ENCODE measurements at regions of chr9 and their contacts with region 1.

Region 1: GRCh38 chr9:134983074-134983473 is 65.4 kb upstream of the FCN1 start:
- DNase-seq: peak; percentile 44
- ATAC-seq: peak in 1 of 2 donors; percentile 16

Region 2: GRCh38 chr9:134698587-134699342 is 284.3 kb before region 1 on chr9:
- intact Hi-C with region 1: loop called (anchors 5 kb)
- DNase-seq: peak; percentile 71
- ATAC-seq: peak; percentile 53 to 75

Region 3: DNA sequence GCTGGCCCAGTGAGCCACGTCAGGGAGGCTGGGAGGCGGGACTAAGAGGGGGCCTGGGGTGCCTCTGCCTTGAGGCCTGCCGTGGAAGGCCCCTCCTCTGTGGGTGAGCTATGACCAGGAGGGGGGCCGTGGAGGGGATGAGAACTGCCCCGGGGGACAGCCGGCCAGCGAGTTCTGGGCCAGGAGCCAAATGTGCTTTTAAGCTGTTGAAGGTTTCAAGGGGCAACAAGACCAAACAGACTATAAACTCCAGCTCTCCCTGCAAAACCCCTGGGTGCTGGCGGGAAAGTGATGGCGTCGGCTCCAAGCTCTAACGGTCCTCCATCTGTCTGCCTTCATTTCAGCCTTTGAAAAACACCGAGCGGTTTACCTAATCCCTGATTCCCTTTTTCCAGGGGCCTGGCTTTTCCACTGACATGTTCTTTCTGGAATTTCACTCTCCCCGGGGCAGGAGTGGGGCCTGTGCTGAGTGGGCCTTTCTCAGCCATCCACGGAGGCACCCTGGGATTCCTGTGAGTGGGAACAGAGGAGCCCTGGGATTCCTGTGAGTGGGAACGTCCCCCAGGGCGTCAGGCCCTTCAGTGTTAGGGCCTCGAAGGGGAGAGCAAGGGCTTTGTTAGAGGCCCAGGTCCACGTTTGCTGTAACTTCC is 275.9 kb before region 1 on chr9:
- intact Hi-C with region 1: loop called in 1 of 2 experiments (anchors 5 kb)
- DNase-seq: peak; percentile 81
- ATAC-seq: peak; percentile 70 to 84

Region 4: DNA sequence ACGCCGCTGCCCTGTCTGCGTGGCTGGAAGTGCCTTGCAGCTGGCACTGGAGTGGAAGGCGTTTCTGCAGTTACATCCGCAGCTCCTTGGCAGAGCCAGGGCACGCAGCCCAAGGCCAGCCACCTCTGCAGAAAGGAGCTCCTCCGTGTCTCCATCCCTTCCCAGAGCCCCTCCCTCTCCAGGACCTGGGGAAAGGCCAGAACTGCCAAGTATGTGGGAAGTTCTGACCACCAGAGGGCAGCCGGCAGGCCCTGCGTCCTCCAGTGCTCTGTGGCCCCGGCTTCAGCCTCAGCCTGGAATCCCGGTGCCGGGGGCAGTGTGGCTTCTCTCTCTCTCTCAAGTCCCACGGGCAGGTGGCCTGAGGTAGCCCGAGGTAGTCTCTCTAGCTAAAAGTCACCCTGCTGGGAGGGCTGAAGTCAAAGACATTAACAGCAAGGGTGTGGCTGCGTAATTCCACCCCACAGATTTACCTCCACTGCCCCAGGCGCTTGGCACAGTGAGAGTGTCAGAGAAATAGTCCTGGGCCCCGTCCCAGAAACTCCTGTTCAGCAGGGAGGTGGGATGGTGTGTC is 204.1 kb before region 1 on chr9:
- intact Hi-C with region 1: loop called (anchors 5 kb)
- DNase-seq: peak; percentile 73
- ATAC-seq: peak; percentile 76 to 79